ENCODE measurements at regions of chr7 and their contacts with region 1.

Region 1: DNA sequence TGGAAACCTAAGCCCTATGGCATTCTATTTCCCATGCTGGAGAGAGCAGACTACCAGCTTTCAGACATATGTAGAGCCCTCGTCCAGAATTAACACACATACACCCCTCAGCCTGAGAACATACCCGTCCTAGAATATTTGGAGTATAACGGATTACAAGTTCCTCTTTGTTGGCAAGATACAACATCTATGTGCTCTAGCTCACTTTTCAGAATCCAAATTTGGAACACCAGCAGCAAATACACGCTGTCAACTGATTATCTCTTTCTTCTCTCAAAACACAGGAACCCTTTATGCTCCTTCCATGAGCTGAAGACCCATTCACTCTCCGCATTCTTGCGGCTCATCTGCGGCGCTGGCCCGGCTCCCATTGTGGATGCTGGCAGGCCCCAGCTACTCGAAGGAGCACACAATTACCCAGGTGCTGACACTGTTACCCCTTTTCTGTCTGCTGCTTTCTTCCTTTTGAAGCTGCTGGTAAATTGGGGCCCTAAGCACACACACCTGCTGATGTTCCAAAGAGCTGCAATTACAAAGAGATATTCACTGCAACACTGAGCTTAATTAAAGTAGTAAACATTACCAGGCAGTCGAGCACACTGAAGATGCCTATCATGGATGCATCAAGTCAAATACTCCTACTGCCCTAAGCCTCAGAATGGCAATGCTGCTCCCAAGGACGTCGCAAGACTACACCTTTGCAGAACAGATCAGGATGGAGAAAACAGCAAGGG is 70.0 kb downstream of the VOPP1 start:
- DNase-seq: no peak
- H3K4me3 ChIP-seq: no peak overlapping the region
- H3K27ac ChIP-seq: no peak overlapping the region
- H3K4me1 ChIP-seq: peaks cover 14 to 44% of the 10 kb centered on the region in 2 experiments; a peak in 3 of 4 replicates
- H3K27me3 ChIP-seq: no peaks in the 10 kb centered on the region
- CTCF ChIP-seq: no peak
- EP300 ChIP-seq: no peak
- RAD21 ChIP-seq: no peak

Region 2: DNA sequence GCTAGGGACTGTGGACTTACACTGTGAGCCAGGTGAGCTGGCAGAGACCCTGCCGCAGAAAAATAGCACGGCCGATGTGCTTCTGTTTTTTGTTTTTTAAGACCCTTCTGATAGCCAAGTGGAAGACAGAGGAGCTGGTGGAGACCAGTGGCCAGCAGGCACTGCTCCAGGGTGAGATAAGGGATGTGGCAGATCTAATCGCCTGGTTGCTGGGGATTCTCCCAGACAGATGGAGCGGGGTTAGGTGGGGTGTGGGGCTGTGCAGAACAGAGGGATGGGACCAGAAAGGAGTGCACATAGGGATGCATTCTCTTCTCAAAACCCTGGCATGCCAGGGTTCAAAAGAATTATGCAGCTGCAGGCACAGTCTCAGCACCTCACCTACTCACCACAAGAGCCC is 12.2 kb before region 1 on chr7:
- CTCF ChIA-PET with region 1: interaction called, 11 read pairs
- POLR2A ChIA-PET with region 1: no interaction called
- DNase-seq: peak; percentile 91
- H3K4me3 ChIP-seq: no peak overlapping the region
- H3K27ac ChIP-seq: peak overlapping the region in 1 of 2 experiments; percentile 65; a peak in 1 of 4 replicates
- H3K4me1 ChIP-seq: peaks cover 0 to 31% of the 10 kb centered on the region in 2 experiments; a peak in 2 of 4 replicates
- H3K27me3 ChIP-seq: no peaks in the 10 kb centered on the region
- CTCF ChIP-seq: no peak
- EP300 ChIP-seq: peak in 1 of 2 experiments; percentile 91; a peak in 2 of 4 replicates
- RAD21 ChIP-seq: peak; percentile 34; the same call in 1 of the 2 replicates

Region 3: DNA sequence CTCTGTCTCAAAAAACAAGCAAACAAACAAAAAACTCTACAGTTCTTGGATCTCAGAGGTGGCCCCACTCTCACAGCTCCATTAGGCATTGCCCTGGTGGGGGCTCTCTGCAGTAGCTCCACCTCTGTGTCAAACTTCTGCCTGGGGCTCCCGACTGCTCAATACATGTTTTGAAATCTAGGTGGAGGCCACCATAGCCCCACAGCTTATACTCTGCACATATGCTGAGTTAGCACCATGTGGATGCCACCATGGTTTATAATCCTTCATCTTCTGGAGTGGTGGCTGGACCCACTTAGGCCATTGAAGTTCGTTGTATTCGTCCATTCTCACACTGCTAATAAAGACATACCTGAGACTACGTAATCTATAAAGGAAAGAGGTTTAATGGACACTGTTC is 281.9 kb after region 1 on chr7:
- CTCF ChIA-PET with region 1: no interaction called
- POLR2A ChIA-PET with region 1: no interaction called
- DNase-seq: no peak
- H3K4me3 ChIP-seq: no peak overlapping the region
- H3K27ac ChIP-seq: no peak overlapping the region
- H3K4me1 ChIP-seq: no peaks in the 10 kb centered on the region
- H3K27me3 ChIP-seq: peaks cover 38% of the 10 kb centered on the region
- CTCF ChIP-seq: no peak
- EP300 ChIP-seq: no peak
- RAD21 ChIP-seq: no peak